Breast epithelium (tissue), 4 donors: ENCODE measurements at regions of chr20 and their contacts with region 1.

Region 1: DNA sequence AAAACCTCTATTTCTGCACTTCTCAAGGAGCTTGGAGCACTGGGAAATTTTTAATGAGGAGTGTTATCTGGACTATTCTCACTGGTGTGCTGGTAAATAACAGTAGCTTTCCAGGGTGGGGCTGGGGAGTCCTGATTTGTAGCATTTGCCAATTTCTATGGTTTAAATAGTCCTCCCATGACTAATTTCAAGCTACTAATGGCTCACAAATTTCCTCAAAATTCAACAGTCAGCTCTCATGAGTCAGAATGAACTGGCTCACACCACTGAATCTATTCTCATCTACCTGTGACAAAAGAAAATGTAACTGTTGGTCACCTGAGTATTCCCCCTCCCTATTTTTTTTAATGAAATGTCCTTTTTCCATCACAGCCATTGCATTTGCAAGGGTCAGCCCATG is 449.6 kb downstream of the KIF16B start:
- DNase-seq: no peak
- H3K4me3 ChIP-seq: no peak overlapping the region
- H3K27ac ChIP-seq: no peak overlapping the region
- H3K4me1 ChIP-seq: no peaks in the 10 kb centered on the region
- H3K27me3 ChIP-seq: peaks cover 0 to 3% of the 10 kb centered on the region in 2 donors
- CTCF ChIP-seq: no peak
- POLR2A ChIP-seq: no peak

Region 2: DNA sequence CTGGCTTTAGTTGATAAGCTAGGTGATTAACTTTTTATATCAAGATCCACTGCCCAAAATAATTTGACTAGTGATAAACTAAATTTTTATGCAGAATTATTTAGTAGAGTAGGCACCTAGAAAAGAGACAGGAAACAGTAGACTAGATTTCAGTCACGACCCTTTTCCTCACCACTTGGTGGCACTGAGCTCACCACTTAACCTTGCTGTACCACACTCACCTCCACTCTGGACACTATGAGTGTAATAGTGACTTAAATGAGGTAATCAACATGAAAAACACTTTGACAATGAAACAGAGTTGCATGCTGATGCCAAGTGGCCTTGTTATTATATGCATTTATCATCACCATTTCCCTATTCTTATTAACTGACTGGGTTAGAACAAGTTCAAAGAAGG is 280.8 kb before region 1 on chr20:
- intact Hi-C with region 1: no loop called
- DNase-seq: no peak
- H3K4me3 ChIP-seq: no peak overlapping the region
- H3K27ac ChIP-seq: no peak overlapping the region
- H3K4me1 ChIP-seq: no peaks in the 10 kb centered on the region
- H3K27me3 ChIP-seq: no peaks in the 10 kb centered on the region
- CTCF ChIP-seq: no peak
- POLR2A ChIP-seq: no peak

Region 3: DNA sequence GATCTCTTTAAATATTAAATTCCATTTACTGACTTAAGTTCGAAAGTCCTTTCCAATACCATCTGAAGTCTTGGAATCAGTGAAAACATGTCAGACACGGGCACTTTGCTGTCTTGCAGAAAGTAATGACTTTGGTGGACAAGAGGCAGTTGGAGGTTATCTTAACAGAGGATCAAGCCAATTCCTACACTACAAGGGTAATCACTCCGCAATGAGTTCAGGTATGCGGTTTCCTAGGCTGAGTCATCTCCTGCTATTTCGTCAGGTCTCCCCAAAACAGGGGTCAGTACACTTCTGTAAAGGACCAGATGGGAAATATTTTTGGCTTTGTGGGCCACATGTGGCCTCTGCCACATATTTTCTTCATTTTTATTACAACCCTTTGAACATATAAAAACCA is 207.0 kb before region 1 on chr20:
- intact Hi-C with region 1: loop called (anchors 5 kb)
- DNase-seq: no peak
- H3K4me3 ChIP-seq: no peak overlapping the region
- H3K27ac ChIP-seq: no peak overlapping the region
- H3K4me1 ChIP-seq: no peaks in the 10 kb centered on the region
- H3K27me3 ChIP-seq: no peaks in the 10 kb centered on the region
- CTCF ChIP-seq: no peak
- POLR2A ChIP-seq: no peak